Activated B cell treated with CpG ODN at 0.5 μM for 24 hours (primary cell): ENCODE measurements at regions of chr1 and their contacts with region 1.

Region 1: DNA sequence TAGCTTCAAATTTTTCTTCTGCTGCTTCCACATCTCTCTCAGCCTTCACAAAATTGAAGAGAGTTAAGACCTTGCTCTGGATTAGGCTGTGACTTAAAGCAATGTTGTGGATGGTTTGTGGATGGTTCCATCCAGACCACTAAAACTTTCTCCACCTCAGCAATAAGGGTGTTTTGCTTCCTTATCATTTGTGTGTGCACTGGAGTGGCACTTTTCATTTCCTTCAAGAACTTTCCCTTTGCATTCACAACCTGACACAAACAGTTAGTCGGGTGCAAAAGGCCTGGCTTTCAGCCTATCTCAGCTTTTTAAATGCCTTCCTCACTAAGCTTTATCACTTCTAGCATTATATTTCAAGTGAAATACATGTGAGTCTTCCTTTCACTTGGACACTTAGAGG is 30.3 kb downstream of the DENND1B start:
- DNase-seq: no peak
- ATAC-seq: peak; percentile 28
- H3K4me3 Mint-ChIP-seq: peak overlapping the region; percentile 29
- H3K27ac Mint-ChIP-seq: no peak overlapping the region
- H3K4me1 Mint-ChIP-seq: peaks cover 33% of the 10 kb centered on the region
- H3K27me3 Mint-ChIP-seq: no peaks in the 10 kb centered on the region
- CTCF ChIP-seq: no peak

Region 2: GRCh38 chr1:197731446-197731845 is 13.5 kb before region 1 on chr1:
- CTCF ChIA-PET with region 1: no interaction called
- POLR2A ChIA-PET with region 1: no interaction called
- intact Hi-C with region 1: loop called (anchors 2 kb)
- DNase-seq: no peak
- ATAC-seq: no peak
- H3K4me3 Mint-ChIP-seq: no peak overlapping the region
- H3K27ac Mint-ChIP-seq: no peak overlapping the region
- H3K4me1 Mint-ChIP-seq: no peaks in the 10 kb centered on the region
- H3K27me3 Mint-ChIP-seq: no peaks in the 10 kb centered on the region
- CTCF ChIP-seq: no peak